Activated CD8-positive, alpha-beta T cell treated with anti-CD3 and anti-CD28 coated beads for 36 hours (primary cell): ENCODE measurements at regions of chr15 and their contacts with region 1.

Region 1: GRCh38 chr15:31352911-31353811 is 26.5 kb downstream of the KLF13 start:
- DNase-seq: peak; percentile 84
- ATAC-seq: peak; percentile 62
- H3K4me3 Mint-ChIP-seq: peak overlapping the region; percentile 59
- H3K27ac Mint-ChIP-seq: peak overlapping the region; percentile 99
- H3K4me1 Mint-ChIP-seq: peaks cover 96% of the 10 kb centered on the region
- H3K27me3 Mint-ChIP-seq: no peaks in the 10 kb centered on the region
- CTCF ChIP-seq: no peak

Region 2: GRCh38 chr15:31235311-31236183 is 117.6 kb before region 1 on chr15:
- CTCF ChIA-PET with region 1: no interaction called
- POLR2A ChIA-PET with region 1: no interaction called
- intact Hi-C with region 1: no loop called
- DNase-seq: no peak
- ATAC-seq: no peak
- H3K4me3 Mint-ChIP-seq: no peak overlapping the region
- H3K27ac Mint-ChIP-seq: no peak overlapping the region
- H3K4me1 Mint-ChIP-seq: peaks cover 14% of the 10 kb centered on the region
- H3K27me3 Mint-ChIP-seq: no peaks in the 10 kb centered on the region
- CTCF ChIP-seq: no peak

Region 3: DNA sequence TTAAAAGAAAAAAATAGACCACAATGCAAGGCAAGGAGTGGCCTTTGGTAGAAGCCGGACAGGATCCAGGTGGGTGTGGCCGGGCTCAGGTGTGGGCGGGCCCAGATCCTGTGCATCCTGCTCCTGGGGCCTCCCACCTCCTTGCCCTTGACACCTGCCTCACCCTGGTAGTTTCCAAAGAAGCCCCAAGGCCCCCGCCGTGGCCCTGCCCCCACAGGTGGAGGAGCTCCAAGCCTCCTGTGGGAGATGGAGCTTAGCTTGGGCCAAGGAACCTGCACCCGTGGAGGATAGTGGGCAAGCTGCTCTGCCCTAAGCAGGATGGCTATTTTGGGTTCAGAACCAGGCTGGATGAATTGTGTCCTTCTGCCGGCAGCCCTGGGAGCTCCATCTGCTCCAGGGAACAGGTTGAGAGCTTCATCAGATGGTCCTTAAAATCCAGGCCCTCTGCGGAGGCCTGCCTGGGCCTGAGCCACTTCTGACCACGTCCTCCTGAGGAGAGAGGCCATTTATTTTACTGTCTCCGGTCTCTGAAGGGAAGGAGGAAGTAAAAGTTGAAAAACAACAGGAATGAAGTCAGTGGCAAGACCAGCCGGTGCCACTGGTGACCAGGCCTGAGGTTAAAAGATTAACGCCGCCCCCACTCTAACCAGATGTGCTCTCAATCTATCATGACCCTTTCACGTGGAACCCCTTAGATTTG is 80.5 kb before region 1 on chr15:
- CTCF ChIA-PET with region 1: no interaction called
- POLR2A ChIA-PET with region 1: no interaction called
- intact Hi-C with region 1: no loop called
- DNase-seq: no peak
- ATAC-seq: no peak
- H3K4me3 Mint-ChIP-seq: no peak overlapping the region
- H3K27ac Mint-ChIP-seq: no peak overlapping the region
- H3K4me1 Mint-ChIP-seq: peaks cover 21% of the 10 kb centered on the region
- H3K27me3 Mint-ChIP-seq: no peaks in the 10 kb centered on the region
- CTCF ChIP-seq: no peak

Region 4: DNA sequence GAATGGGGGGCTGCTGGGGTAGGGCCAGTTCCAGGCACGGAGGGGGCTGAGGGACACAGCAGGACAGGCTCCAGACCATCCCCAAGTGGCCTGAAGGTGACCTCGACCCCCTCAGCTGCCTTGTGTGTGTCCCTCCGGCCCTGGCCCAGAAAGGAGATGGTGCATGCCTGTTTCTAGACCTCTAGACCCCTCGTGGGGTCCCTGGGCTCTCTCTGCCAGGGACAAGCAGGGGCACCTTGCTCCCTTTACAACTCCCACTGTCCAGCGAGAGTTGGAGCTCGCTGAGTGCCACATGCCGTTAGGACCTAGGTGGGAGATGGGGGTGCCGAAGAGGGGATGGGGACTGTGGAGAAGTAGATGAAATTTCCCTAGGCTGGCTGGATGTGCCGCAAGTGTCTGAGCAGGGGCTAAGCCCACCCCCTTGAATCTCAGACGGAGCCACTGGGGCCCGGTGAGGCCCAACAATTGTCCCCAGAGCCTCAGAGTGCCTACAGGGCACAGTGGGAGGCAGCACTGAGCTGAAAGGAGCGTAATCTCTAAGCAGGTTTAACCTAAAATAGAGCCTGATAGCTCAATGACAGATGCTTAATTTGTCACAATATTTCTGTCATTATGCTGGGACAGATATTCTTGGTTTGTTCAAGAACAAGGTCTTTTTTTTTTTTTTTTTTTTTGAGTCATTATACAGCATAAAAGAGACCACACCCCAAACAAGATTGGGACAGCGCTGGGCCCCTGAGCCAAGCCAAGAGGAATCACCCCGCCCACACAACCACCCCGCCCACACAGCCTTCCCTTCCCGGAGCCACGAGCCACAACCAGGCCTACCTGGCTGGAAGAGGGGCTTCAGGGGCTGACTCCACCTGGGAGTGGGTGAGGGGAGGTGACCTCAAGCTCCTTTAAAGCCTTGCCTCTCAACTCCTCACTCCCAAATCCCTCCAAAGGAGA is 50.1 kb before region 1 on chr15:
- CTCF ChIA-PET with region 1: interaction called, 3 read pairs
- POLR2A ChIA-PET with region 1: no interaction called
- intact Hi-C with region 1: loop called (anchors 5 kb)
- DNase-seq: peak; percentile 35
- ATAC-seq: peak; percentile 68
- H3K4me3 Mint-ChIP-seq: no peak overlapping the region
- H3K27ac Mint-ChIP-seq: no peak overlapping the region
- H3K4me1 Mint-ChIP-seq: peaks cover 29% of the 10 kb centered on the region
- H3K27me3 Mint-ChIP-seq: no peaks in the 10 kb centered on the region
- CTCF ChIP-seq: peak; percentile 25

Region 5: DNA sequence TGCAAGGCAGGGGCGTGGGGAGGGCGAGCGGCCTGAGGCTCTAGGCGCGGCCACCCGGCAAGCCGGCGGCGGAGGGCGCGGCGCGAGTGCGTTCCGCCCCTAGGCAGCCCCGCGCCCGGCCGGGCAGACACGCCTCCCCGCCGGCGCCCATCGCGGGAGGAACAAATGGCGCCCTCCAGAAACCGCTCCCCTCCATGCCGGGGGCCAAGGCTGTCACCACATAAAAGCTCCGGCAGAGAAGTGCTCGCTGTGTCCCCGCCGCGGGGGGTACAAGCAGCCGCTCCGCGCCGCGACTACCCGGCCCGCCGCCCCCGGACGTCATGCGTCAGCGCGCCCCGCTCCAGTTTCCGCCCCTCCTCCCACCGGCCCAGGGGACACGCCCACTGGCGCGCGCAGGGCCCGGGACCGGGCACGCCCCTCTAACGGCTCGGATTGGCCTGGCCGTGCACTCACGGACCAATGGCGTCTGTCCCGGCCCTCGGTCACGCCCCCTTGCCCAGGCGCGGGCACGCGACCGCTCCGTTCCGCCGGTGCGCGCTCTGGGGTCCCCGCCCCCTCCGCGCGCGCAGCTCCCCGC is 26.9 kb before region 1 on chr15:
- CTCF ChIA-PET with region 1: interaction called, 3 read pairs
- POLR2A ChIA-PET with region 1: interaction called, 23 read pairs
- intact Hi-C with region 1: no loop called
- DNase-seq: peak; percentile 99
- ATAC-seq: peak; percentile 86
- H3K4me3 Mint-ChIP-seq: peak overlapping the region; percentile 86
- H3K27ac Mint-ChIP-seq: peak overlapping the region; percentile 75
- H3K4me1 Mint-ChIP-seq: peaks cover 60% of the 10 kb centered on the region
- H3K27me3 Mint-ChIP-seq: no peaks in the 10 kb centered on the region
- CTCF ChIP-seq: no peak

Region 6: GRCh38 chr15:31402511-31403056 is 49.4 kb after region 1 on chr15:
- CTCF ChIA-PET with region 1: no interaction called
- POLR2A ChIA-PET with region 1: no interaction called
- intact Hi-C with region 1: no loop called
- DNase-seq: no peak
- ATAC-seq: no peak
- H3K4me3 Mint-ChIP-seq: no peak overlapping the region
- H3K27ac Mint-ChIP-seq: no peak overlapping the region
- H3K4me1 Mint-ChIP-seq: peaks cover 61% of the 10 kb centered on the region
- H3K27me3 Mint-ChIP-seq: no peaks in the 10 kb centered on the region
- CTCF ChIP-seq: no peak

Region 7: DNA sequence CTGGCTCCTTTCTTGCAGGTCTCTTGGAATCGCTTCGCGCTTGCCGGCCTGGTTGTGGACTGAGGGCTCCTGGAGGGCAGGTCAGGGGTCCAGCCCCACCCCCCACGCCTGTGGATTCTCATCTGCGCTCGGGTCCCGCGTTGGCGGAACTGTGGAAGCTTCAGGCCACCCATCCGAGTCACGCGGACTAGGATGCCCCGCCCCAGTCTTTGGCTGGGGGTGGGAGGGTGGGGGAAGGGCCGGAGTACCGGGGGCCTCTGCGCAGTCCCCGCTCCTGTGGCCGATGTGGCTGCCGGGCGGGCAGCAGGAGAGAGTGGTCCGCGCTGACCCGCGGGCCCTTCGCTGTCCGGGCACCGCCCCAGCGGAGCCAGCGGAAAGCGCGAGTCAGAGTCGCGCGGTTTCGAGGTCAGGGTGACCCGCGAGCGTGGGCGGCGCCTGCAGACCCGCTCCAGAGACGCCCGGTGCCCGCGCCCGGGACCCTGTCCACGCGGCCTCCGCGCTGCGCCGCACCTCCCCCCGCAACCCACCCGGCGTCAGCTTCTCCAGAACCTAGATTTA is 87.7 kb after region 1 on chr15:
- CTCF ChIA-PET with region 1: interaction called, 17 read pairs
- POLR2A ChIA-PET with region 1: interaction called, 78 read pairs
- intact Hi-C with region 1: no loop called
- DNase-seq: peak; percentile 61
- ATAC-seq: peak; percentile 8
- H3K4me3 Mint-ChIP-seq: peak overlapping the region; percentile 66
- H3K27ac Mint-ChIP-seq: peak overlapping the region; percentile 71
- H3K4me1 Mint-ChIP-seq: peaks cover 73% of the 10 kb centered on the region
- H3K27me3 Mint-ChIP-seq: no peaks in the 10 kb centered on the region
- CTCF ChIP-seq: no peak

Region 8: GRCh38 chr15:31457631-31458526 is 104.7 kb after region 1 on chr15:
- CTCF ChIA-PET with region 1: no interaction called
- POLR2A ChIA-PET with region 1: no interaction called
- intact Hi-C with region 1: no loop called
- DNase-seq: no peak
- ATAC-seq: no peak
- H3K4me3 Mint-ChIP-seq: no peak overlapping the region
- H3K27ac Mint-ChIP-seq: no peak overlapping the region
- H3K4me1 Mint-ChIP-seq: peaks cover 28% of the 10 kb centered on the region
- H3K27me3 Mint-ChIP-seq: no peaks in the 10 kb centered on the region
- CTCF ChIP-seq: no peak